ENCODE measurements at regions of chr12 and their contacts with region 1.

Region 1: DNA sequence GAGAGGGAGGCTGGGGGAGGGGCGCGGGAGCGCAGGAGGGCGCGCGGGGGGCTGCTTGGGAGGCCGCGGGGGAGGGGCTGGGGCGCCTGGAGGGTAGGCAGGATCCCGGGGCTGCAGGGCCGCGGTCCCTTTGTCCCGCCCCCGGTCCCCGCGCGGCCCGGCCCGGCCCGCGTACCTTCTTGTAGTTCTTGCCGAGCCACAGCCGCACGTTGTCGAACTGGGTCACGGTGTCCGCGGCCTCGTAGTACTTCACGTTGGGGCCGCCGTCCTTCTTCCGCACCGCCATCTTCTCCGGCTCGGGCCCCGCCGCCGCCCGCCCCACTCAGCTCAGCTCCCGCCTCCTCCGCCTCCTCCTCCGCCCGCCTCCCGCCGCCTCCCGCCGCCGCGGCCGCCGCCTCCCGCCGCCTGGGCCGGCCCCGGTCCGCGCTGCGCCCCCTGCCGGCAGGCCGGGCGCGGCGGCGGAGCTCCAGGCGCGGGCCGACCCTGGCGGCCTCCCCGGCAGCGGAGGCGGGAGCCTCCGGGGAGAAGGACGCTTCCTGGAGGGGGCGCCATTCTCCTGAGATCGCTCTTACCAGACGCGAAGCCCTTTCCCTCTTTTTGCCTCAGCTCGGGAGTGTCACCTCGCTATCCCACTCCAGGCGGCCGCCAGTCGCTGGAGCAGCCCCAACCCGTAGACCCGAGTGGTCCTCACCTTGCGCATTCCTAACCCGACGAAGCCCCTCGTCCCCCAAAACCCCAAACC is at the start of gene SMARCC2:
- DNase-seq: peak; percentile 95
- H3K4me3 ChIP-seq: peak within 1 kb of the TSS; percentile 84 to 98 (median 93)
- H3K27ac ChIP-seq: peak within 1 kb of the TSS; percentile 91 to 95 (median 92)
- H3K4me1 ChIP-seq: peaks cover 0 to 32% (median 25%) of the 10 kb centered on the region in 4 donors
- H3K27me3 ChIP-seq: no peaks in the 10 kb centered on the region
- CTCF ChIP-seq: peak in 3 of 4 experiments; percentile 39 to 72 (median 63)
- EP300 ChIP-seq: no peak
- POLR2A ChIP-seq: no peak
- total RNA-seq, gene SMARCC2: 55.7 to 135 (median 70.7) TPM

Region 2: GRCh38 chr12:56041552-56042429 is 147.6 kb before region 1 on chr12 and contains the start of gene RPS26:
- intact Hi-C with region 1: loop called (anchors 10 kb)
- DNase-seq: peak; percentile 98
- H3K4me3 ChIP-seq: peak within 1 kb of the TSS; percentile 56 to 94 (median 72)
- H3K27ac ChIP-seq: peak within 1 kb of the TSS; percentile 91 to 96 (median 94)
- H3K4me1 ChIP-seq: peaks cover 0 to 20% (median 19%) of the 10 kb centered on the region in 4 donors
- H3K27me3 ChIP-seq: no peaks in the 10 kb centered on the region
- CTCF ChIP-seq: peak in 1 of 4 experiments; percentile 40
- EP300 ChIP-seq: peak in 2 of 4 donors; percentile 32 to 52
- POLR2A ChIP-seq: peak; percentile 97
- total RNA-seq, gene RPS26: 130 to 3,746 (median 1,580) TPM

Region 3: DNA sequence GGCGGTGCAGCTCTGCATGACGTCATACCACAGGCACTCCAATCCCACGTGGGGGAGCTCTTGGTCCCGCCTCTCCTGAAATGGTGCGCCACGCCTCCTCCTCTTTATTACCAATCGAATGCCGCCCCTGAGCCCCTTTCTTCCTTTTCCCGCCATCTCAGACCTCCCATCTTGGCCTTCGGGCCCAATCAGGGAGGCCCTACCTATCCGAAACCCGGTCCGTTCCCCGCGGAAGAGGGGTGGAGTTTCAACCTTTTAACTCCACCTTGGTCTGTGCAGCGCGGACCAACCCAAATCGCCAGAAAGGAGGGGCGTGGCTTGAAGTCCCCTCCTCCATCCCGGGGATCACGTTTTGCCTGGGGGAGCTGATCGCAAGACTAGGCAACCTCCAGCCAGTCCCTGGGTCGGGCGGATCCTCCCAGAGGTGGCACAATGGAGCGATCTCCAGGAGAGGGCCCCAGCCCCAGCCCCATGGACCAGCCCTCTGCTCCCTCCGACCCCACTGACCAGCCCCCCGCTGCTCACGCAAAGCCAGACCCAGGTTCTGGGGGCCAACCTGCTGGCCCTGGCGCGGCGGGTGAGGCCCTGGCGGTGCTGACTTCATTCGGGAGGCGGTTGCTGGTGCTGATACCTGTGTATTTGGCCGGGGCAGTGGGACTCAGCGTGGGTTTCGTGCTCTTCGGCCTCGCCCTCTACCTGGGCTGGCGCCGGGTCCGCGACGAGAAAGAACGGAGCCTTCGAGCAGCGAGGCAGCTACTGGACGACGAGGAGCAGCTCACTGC is 61.3 kb before region 1 on chr12 and contains the start of gene ESYT1:
- intact Hi-C with region 1: loop called (anchors 1 kb)
- DNase-seq: peak; percentile 100
- H3K4me3 ChIP-seq: peak within 1 kb of the TSS; percentile 76 to 83 (median 80)
- H3K27ac ChIP-seq: peak within 1 kb of the TSS; percentile 95 to 98 (median 96)
- H3K4me1 ChIP-seq: peaks cover 0 to 46% (median 32%) of the 10 kb centered on the region in 4 donors
- H3K27me3 ChIP-seq: no peaks in the 10 kb centered on the region
- CTCF ChIP-seq: no peak
- EP300 ChIP-seq: no peak
- POLR2A ChIP-seq: peak; percentile 97 to 98
- total RNA-seq, gene ESYT1: 67.6 to 102 (median 88.7) TPM

Region 4: DNA sequence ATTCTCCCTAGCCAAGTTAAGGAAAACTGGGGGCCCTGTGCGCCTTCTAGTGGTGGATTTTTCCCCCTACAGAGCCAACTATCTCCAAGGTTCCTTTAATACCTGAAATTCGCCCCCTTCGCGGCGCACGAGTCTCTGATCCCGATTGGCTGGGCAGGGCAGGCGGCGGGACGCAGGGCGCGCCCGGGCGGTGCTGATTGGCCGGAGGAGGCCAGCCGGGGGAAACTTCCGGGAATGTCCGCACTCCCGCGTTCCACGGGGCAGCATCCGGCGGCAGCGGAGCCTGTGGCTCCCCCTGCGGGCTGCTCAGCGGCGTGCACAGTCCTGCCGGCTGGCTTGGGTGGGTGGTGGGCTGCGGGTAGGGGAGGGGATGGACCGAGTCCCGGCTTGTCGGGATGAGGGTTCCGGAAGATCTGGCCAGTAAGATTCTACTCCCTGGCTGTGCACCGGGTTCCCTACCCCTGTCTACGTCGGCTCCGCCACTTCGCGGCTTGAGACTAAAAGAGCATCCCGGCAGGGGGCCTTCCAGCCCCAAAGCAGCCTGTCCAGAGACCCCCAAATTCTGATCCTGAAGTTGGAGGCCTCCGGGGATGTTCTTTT is 34.9 kb after region 1 on chr12 and contains the start of gene NABP2:
- intact Hi-C with region 1: loop called (anchors 1 kb)
- DNase-seq: peak; percentile 99
- H3K4me3 ChIP-seq: peak within 1 kb of the TSS; percentile 42 to 65 (median 57)
- H3K27ac ChIP-seq: peak within 1 kb of the TSS; percentile 98 to 99 (median 98)
- H3K4me1 ChIP-seq: peaks cover 0 to 47% (median 45%) of the 10 kb centered on the region in 4 donors
- H3K27me3 ChIP-seq: no peaks in the 10 kb centered on the region
- CTCF ChIP-seq: peak; percentile 84 to 94 (median 88)
- EP300 ChIP-seq: no peak
- POLR2A ChIP-seq: peak in 1 of 2 donors; percentile 21
- total RNA-seq, gene NABP2: 17.2 to 33.5 (median 31.6) TPM

Region 5: GRCh38 chr12:56468216-56469006 is 279.1 kb after region 1 on chr12 and contains the start of gene SPRYD4:
- intact Hi-C with region 1: loop called (anchors 5 kb)
- DNase-seq: peak; percentile 97
- H3K4me3 ChIP-seq: peak within 1 kb of the TSS; percentile 64 to 80 (median 74)
- H3K27ac ChIP-seq: peak within 1 kb of the TSS; percentile 84 to 90 (median 86)
- H3K4me1 ChIP-seq: peaks cover 0 to 22% (median 17%) of the 10 kb centered on the region in 4 donors
- H3K27me3 ChIP-seq: no peaks in the 10 kb centered on the region
- CTCF ChIP-seq: peak in 1 of 4 experiments; percentile 9
- EP300 ChIP-seq: peak in 2 of 4 donors; percentile 40 to 46
- POLR2A ChIP-seq: peak; percentile 88 to 91
- total RNA-seq, gene SPRYD4: 1.7 to 3.1 (median 2.3) TPM

Region 6: DNA sequence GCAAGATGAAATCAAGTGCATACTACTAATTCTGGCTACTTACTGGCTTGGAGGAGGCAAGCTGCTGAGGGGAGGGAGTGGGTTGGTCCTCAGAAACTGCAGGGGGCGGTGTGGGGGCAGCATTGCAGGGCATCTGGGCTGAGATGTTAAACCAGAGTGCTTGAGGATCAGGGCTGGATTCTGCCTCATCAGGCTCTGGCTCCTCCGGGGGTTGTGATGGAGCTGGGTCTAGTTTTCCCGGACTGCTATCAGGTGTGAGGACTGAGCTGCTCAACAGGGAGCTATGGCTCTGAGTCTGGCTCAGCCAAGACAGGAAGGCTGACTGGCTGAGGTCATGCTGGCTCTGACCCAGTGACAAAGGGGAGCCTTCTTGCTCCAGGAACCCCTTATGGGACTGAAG is 412.2 kb after region 1 on chr12:
- intact Hi-C with region 1: no loop called
- DNase-seq: no peak
- H3K4me3 ChIP-seq: no peak overlapping the region
- H3K27ac ChIP-seq: no peak overlapping the region
- H3K4me1 ChIP-seq: no peaks in the 10 kb centered on the region
- H3K27me3 ChIP-seq: no peaks in the 10 kb centered on the region
- CTCF ChIP-seq: no peak
- EP300 ChIP-seq: no peak
- POLR2A ChIP-seq: no peak